PC-3 (cell line): ENCODE measurements at regions of chr2 and their contacts with region 1.

Region 1: GRCh38 chr2:53970724-53971602 is at the start of gene PSME4:
- DNase-seq: peak; percentile 85
- ATAC-seq: peak; percentile 80
- H3K4me3 ChIP-seq: peak within 1 kb of the TSS; percentile 91
- H3K27ac ChIP-seq: peak within 1 kb of the TSS; percentile 58
- H3K4me1 ChIP-seq: peaks cover 21% of the 10 kb centered on the region
- H3K27me3 ChIP-seq: no peaks in the 10 kb centered on the region
- CTCF ChIP-seq: no peak
- total RNA-seq, gene PSME4: 54.7 and 70.6 TPM in 2 replicates

Region 2: DNA sequence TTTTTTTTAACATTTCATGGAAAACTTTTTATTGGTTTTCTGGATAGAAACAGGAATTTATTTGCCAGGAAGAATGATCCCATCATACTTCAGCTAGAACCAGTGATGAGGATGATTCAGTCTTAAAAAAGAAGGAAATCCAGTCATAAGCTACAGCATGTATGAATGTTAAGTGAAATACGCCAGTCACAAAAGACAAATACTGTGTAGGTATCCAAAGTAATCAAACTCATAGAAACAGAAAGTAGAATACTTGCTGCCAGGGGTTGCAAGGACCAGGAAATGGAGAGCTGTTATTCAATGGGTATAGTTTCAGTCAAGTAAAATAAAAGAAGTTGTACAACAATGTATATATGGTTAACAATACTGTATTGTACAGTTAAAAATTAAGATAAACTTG is 21.5 kb before region 1 on chr2:
- CTCF ChIA-PET with region 1: no interaction called
- POLR2A ChIA-PET with region 1: interaction called, 30 read pairs
- intact Hi-C with region 1: no loop called
- DNase-seq: peak; percentile 41
- ATAC-seq: peak; percentile 83
- H3K4me3 ChIP-seq: no peak overlapping the region
- H3K27ac ChIP-seq: no peak overlapping the region
- H3K4me1 ChIP-seq: peaks cover 6% of the 10 kb centered on the region; the same call in 1 of the 2 replicates
- H3K27me3 ChIP-seq: no peaks in the 10 kb centered on the region
- CTCF ChIP-seq: no peak

Region 3: DNA sequence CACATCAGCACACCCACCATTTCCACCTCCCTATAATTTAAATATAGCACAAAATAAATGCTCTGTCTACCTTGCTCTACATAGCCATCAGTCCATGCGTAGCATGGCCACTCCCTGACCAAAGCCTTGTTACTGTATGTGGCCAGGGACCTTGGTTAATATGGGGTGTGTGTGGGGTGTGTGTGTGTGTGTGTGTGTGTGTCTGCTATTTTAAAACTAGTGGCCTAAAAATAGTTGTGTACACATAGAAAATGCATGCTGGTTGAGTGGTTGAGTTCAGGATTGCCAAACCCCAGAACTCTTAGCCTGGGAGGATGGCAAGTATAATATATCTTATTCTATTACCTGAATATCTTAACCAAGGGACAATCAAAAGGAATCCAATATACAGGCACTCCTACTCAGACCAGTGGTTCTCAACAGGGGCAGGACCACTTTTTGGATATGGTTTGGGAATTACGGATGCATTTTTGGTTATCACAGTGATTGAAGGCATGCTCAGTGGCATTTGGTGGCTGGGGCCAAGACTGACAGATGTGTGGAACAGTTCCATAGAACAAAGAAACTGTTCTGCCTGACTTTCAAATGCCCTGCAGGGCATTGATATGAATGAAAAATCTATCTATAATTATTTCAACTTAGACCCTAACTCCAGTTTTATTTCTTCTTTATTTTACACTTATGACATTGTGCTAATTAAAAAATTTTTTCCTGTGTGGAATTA is 72.1 kb after region 1 on chr2:
- CTCF ChIA-PET with region 1: no interaction called
- POLR2A ChIA-PET with region 1: interaction called, 4 read pairs
- intact Hi-C with region 1: loop called (anchors 1 kb)
- DNase-seq: no peak
- ATAC-seq: no peak
- H3K4me3 ChIP-seq: no peak overlapping the region
- H3K27ac ChIP-seq: peak overlapping the region; percentile 90
- H3K4me1 ChIP-seq: peaks cover 27% of the 10 kb centered on the region
- H3K27me3 ChIP-seq: no peaks in the 10 kb centered on the region
- CTCF ChIP-seq: no peak

Region 4: DNA sequence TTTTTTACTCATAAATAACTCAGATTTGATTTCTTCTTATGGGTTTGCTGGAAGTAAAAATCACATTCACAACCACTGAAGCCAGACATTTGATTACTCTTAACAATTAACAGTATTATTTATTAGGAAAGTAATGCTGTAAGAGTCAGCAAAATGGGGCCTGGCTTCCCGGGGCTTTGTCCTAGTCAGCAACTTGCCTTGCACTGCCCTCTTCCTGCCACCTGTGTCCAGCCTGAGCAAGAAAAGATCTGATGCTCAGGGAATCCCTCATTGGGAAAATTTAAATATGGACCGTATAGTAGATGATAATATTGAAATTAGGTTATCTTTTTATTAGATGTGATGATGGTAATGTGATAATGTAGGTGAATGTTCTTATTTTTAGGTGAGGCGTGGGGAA is 113.6 kb after region 1 on chr2:
- CTCF ChIA-PET with region 1: interaction called, 3 read pairs
- POLR2A ChIA-PET with region 1: no interaction called
- intact Hi-C with region 1: loop called (anchors 2 kb)
- DNase-seq: peak; percentile 55
- ATAC-seq: peak; percentile 94
- H3K4me3 ChIP-seq: 0 out of 2 replicates have a peak overlapping the region, but pooled peaks have one; percentile 9
- H3K27ac ChIP-seq: no peak overlapping the region
- H3K4me1 ChIP-seq: peaks cover 19% of the 10 kb centered on the region
- H3K27me3 ChIP-seq: no peaks in the 10 kb centered on the region
- CTCF ChIP-seq: peak; percentile 73

Region 5: DNA sequence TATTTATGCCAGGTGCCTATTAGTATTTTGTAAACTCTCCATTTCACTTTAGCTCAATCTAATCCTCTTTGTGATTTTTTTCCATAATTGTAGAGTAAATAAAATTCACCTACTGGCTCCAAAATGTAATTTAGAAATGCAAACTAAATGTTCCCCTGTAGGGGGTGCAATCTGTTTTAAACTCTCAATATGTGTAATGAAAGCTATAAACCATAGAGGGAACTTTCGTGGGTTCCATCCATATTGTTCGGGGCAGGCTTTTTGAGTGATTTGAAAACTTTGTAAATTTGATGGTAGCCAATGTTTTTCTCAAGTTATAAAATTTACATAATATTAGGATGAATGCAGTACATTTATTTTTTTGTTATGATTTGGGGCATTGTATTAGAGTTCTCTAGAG is 235.6 kb after region 1 on chr2:
- CTCF ChIA-PET with region 1: no interaction called
- POLR2A ChIA-PET with region 1: no interaction called
- intact Hi-C with region 1: no loop called
- DNase-seq: peak; percentile 68
- ATAC-seq: peak; percentile 46; the same call in 1 of the 2 replicates
- H3K4me3 ChIP-seq: no peak overlapping the region
- H3K27ac ChIP-seq: no peak overlapping the region
- H3K4me1 ChIP-seq: no peaks in the 10 kb centered on the region
- H3K27me3 ChIP-seq: no peaks in the 10 kb centered on the region
- CTCF ChIP-seq: peak; percentile 84

Region 6: GRCh38 chr2:54522624-54523281 is 551.8 kb after region 1 on chr2:
- CTCF ChIA-PET with region 1: no interaction called
- POLR2A ChIA-PET with region 1: no interaction called
- intact Hi-C with region 1: no loop called
- DNase-seq: peak; percentile 88
- ATAC-seq: peak; percentile 79
- H3K4me3 ChIP-seq: no peak overlapping the region
- H3K27ac ChIP-seq: peak overlapping the region; percentile 28
- H3K4me1 ChIP-seq: peaks cover 35% of the 10 kb centered on the region
- H3K27me3 ChIP-seq: no peaks in the 10 kb centered on the region
- CTCF ChIP-seq: peak; percentile 79